ENCODE measurements at regions of chr12 and their contacts with region 1.

Region 1: DNA sequence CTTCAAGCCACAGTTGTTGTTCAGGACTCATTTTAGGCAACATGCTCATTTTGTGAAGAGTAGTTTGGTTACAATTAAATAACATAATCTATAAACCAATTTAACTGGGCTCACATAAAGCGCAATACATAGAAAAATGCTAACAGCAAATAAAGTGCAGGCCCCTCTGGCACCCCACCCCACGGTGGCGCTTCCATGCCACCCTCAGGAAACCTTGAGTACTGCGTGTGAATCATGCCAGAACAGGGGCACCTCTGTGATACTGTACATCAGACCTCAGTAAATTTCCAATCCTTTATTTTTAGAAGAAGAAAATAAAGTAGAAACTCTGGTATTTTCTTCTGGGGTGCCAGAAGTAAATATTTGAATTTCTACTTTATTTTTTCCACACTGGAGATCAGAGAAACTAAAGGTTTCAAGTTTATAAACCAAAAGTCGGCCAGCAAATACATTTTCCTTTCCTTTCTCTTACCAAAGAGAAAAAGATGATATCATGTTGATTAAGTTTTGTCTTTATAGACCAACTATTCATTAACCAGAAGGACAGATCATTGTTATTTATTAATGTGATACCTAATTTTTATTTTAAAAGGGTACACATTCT is 316.8 kb downstream of the PAWR start:
- DNase-seq: no peak
- ATAC-seq: peak; percentile 94
- H3K4me3 ChIP-seq: no peak overlapping the region
- H3K27ac ChIP-seq: no peak overlapping the region
- H3K4me1 ChIP-seq: no peaks in the 10 kb centered on the region
- H3K27me3 ChIP-seq: no peaks in the 10 kb centered on the region
- CTCF ChIP-seq: peak; percentile 48 to 59 (median 58)
- EP300 ChIP-seq: no peak
- POLR2A ChIP-seq: no peak
- RAD21 ChIP-seq: peak; percentile 59

Region 2: DNA sequence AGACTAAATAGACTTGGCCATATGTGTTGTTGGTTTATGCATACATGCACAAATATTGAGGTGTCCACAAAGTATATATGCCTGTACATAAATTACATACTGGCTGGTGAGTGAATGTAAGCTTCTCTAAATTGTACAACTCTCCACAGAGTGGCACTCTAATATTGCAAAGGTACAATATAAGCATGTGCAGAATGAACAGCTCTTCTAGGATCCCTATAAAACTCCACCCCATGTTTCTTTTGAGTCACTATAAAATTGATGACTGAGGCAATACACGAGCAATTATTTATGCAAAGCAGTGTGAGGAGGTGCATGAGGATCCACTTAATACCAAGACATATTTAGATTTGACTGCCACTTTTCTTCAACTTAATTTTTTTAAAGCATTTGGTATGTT is 1371.1 kb before region 1 on chr12:
- CTCF ChIA-PET with region 1: no interaction called
- POLR2A ChIA-PET with region 1: no interaction called
- RAD21 ChIA-PET with region 1: no interaction called
- SMC1A ChIA-PET with region 1: interaction called, 5 read pairs
- in situ Hi-C with region 1: no loop called
- intact Hi-C with region 1: loop called (anchors 10 kb)
- DNase-seq: no peak
- ATAC-seq: no peak
- H3K4me3 ChIP-seq: no peak overlapping the region
- H3K27ac ChIP-seq: no peak overlapping the region
- H3K4me1 ChIP-seq: peaks cover 4% of the 10 kb centered on the region
- H3K27me3 ChIP-seq: no peaks in the 10 kb centered on the region
- CTCF ChIP-seq: no peak; a peak in 1 of 6 replicates
- EP300 ChIP-seq: no peak
- POLR2A ChIP-seq: no peak
- RAD21 ChIP-seq: peak; percentile 36; the same call in 1 of the 2 replicates

Region 3: DNA sequence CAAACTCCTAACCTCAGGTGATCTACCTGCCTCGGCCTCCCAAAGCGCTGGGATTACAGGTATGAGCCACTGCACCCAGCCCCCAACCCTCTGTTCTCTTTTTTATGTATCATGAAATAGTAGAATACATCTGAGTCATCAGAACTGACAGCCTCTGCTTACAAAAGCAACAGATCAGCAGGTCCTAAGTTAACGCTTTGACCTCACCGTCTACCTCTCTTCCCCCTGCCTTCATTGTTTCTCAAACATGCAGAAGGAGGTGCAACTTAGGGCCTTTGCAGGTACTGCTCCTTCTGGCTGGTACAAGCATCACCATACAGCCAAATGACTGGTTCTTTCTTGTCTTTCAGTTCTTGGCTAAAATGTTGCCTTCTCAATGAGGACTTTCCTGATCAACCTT is 67.5 kb after region 1 on chr12:
- CTCF ChIA-PET with region 1: no interaction called
- POLR2A ChIA-PET with region 1: no interaction called
- RAD21 ChIA-PET with region 1: no interaction called
- SMC1A ChIA-PET with region 1: no interaction called
- in situ Hi-C with region 1: no loop called
- intact Hi-C with region 1: no loop called
- DNase-seq: no peak
- ATAC-seq: no peak
- H3K4me3 ChIP-seq: no peak overlapping the region
- H3K27ac ChIP-seq: no peak overlapping the region
- H3K4me1 ChIP-seq: no peaks in the 10 kb centered on the region
- H3K27me3 ChIP-seq: no peaks in the 10 kb centered on the region
- CTCF ChIP-seq: no peak
- EP300 ChIP-seq: no peak
- POLR2A ChIP-seq: no peak
- RAD21 ChIP-seq: no peak

Measured in GM12878 (cell line).